Ovary (tissue), 10 donors: ENCODE measurements at regions of chr12 and their contacts with region 1.

Region 1: GRCh38 chr12:15276088-15276698 is 46.1 kb upstream of the PTPRO start:
- DNase-seq: peak in 1 of 5 donors; percentile 33
- H3K4me3 ChIP-seq: no peak overlapping the region
- H3K27ac ChIP-seq: no peak overlapping the region
- H3K4me1 ChIP-seq: no peaks in the 10 kb centered on the region
- H3K27me3 ChIP-seq: no peaks in the 10 kb centered on the region
- CTCF ChIP-seq: peak; percentile 44 to 64 (median 59)
- EP300 ChIP-seq: no peak
- POLR2A ChIP-seq: no peak

Region 2: GRCh38 chr12:15522565-15523187 is 246.5 kb after region 1 on chr12:
- intact Hi-C with region 1: loop called in 1 of 4 experiments (anchors 10 kb)
- DNase-seq: no peak
- H3K4me3 ChIP-seq: no peak overlapping the region
- H3K27ac ChIP-seq: no peak overlapping the region
- H3K4me1 ChIP-seq: no peaks in the 10 kb centered on the region
- H3K27me3 ChIP-seq: no peaks in the 10 kb centered on the region
- CTCF ChIP-seq: no peak
- EP300 ChIP-seq: no peak
- POLR2A ChIP-seq: no peak

Region 3: GRCh38 chr12:15584366-15585041 is 308.3 kb after region 1 on chr12:
- intact Hi-C with region 1: loop called (anchors 5 to 10 kb)
- DNase-seq: peak in 1 of 5 donors; percentile 36
- H3K4me3 ChIP-seq: no peak overlapping the region
- H3K27ac ChIP-seq: no peak overlapping the region
- H3K4me1 ChIP-seq: no peaks in the 10 kb centered on the region
- H3K27me3 ChIP-seq: no peaks in the 10 kb centered on the region
- CTCF ChIP-seq: peak; percentile 15 to 58 (median 44)
- EP300 ChIP-seq: no peak
- POLR2A ChIP-seq: no peak

Region 4: DNA sequence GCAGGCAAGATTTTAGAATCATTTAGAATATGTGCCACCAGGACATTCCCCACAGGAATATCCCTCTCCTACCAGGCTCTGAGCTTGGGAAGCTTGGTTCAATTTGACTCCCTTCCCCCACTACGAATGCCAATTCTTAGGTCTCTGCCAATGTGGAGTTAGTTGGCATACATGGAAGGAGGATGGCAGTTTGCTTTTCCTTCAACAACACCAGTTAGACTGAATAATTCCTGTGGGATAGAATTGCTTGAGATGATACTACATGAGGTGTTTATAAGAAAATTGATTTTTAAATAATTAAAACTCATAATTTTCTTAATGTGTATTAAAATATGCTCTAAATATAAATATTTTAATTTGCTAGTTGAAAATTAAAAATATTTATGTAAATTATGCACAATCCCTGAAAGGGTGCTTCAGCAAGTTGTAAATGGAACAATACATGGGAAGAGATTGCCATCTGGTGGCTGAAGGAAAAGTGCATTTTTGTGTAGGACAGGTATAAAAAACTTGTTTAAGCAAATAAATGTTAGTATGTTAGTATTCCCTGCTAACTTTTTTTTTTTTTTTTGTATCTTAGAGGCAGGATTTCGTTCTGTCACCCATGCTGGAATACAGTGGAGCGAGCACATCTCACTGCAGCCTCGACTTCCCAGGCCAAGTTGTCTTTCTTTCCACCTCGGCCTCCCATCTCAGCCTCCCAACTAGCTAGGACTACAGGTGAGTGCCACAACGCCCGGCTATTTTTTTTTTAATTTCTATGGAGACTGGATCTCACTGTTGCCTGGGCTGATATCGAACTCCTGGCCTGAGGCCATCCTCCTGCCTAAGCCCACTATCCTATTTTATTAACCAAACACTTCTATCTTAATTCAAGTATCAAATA is 580.1 kb after region 1 on chr12:
- intact Hi-C with region 1: loop called in 3 of 4 experiments (anchors 10 kb)
- DNase-seq: peak in 4 of 5 donors; percentile 28 to 66 (median 34)
- H3K4me3 ChIP-seq: no peak overlapping the region
- H3K27ac ChIP-seq: no peak overlapping the region
- H3K4me1 ChIP-seq: peaks cover 1% of the 10 kb centered on the region
- H3K27me3 ChIP-seq: no peaks in the 10 kb centered on the region
- CTCF ChIP-seq: peak; percentile 57 to 95 (median 84)
- EP300 ChIP-seq: no peak
- POLR2A ChIP-seq: no peak